HepG2 (cell line): ENCODE measurements at regions of chr3 and their contacts with region 1.

Region 1: DNA sequence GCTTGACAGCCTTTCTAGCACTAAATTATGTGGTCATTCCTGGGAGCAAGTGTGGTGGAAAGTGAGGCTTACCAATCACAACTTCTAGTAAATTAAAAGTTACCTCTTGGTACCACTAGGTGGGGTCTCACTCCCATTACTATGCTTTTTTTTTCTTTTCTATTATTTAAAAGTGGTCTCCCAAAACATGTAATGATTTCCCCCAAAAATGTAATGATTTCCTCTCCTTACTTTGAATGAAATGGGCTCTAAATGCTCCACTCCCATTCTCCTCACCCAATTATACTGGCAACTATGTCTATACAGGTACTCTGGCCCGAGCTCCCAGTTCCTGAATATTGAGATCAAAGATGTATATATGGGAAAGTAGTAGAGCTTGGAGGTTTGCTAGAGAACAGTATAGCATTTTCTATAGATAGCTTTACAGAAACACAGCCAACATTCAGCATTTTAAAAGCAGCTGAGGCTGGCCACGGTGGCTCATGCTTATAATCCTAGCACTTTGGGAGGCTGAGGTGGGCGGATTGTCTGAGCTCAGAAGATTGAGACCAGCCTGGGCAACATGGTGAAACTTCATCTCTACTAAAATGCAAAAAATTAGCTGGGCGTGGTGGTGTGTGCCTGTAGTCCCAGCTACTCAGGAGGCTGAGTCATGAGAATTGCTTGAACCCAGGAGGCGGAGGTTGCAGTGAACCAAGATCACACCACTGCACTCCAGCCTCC is 70.9 kb downstream of the DCUN1D1 start:
- DNase-seq: no peak
- ATAC-seq: peak; percentile 57; the same call in 2 of the 3 replicates
- H3K4me3 ChIP-seq: no peak overlapping the region
- H3K27ac ChIP-seq: no peak overlapping the region
- H3K4me1 ChIP-seq: no peaks in the 10 kb centered on the region
- H3K27me3 ChIP-seq: no peaks in the 10 kb centered on the region
- CTCF ChIP-seq: peak; percentile 49
- EP300 ChIP-seq: no peak
- POLR2A ChIP-seq: no peak
- RAD21 ChIP-seq: no peak

Region 2: DNA sequence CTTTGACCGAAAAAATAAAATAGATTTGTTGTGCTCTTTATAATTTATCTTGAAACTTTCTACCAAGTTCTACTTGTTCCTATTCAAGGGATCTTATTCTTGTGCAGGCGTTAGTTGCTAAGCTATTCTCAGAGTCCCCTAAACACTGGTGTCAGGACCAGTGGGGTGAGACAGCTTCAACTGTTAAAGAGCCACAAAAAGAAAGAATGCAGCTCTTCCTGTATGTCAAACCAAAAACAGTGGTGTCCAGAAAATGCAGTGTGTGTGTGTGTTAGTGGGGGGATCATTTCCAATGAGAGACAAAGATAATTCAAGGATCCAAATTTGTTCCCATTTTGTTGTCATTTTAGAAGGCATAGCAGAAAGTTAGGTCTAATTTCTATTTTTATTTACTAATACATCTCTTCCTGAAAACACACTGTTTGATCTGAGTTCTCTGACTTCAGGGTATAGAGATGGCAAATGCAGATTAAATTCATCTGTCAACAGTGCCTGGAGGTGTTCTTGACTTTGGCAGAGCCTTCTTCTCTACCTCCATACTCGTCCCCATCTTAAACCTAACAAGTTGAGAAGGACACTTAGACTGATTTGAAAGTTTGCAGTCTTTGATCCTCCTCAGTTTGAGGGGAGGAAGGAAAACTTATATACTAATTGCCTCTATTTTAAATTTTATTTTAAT is 889.7 kb before region 1 on chr3:
- CTCF ChIA-PET with region 1: no interaction called
- POLR2A ChIA-PET with region 1: no interaction called
- in situ Hi-C with region 1: no loop called
- intact Hi-C with region 1: loop called (anchors 5 kb)
- DNase-seq: no peak
- ATAC-seq: no peak
- H3K4me3 ChIP-seq: no peak overlapping the region
- H3K27ac ChIP-seq: no peak overlapping the region
- H3K4me1 ChIP-seq: no peaks in the 10 kb centered on the region
- H3K27me3 ChIP-seq: no peaks in the 10 kb centered on the region; a peak in 1 of 5 replicates
- CTCF ChIP-seq: no peak
- EP300 ChIP-seq: no peak
- POLR2A ChIP-seq: no peak
- RAD21 ChIP-seq: no peak

Region 3: GRCh38 chr3:182692021-182692420 is 217.5 kb before region 1 on chr3:
- CTCF ChIA-PET with region 1: no interaction called
- POLR2A ChIA-PET with region 1: no interaction called
- in situ Hi-C with region 1: no loop called
- intact Hi-C with region 1: no loop called
- DNase-seq: no peak
- ATAC-seq: no peak
- H3K4me3 ChIP-seq: no peak overlapping the region
- H3K27ac ChIP-seq: no peak overlapping the region
- H3K4me1 ChIP-seq: no peaks in the 10 kb centered on the region
- H3K27me3 ChIP-seq: 0 out of 5 replicates have a peak, but pooled peaks cover 0 to 2% of the 10 kb centered on the region in 2 experiments
- CTCF ChIP-seq: no peak
- EP300 ChIP-seq: no peak
- POLR2A ChIP-seq: no peak
- RAD21 ChIP-seq: no peak

Region 4: GRCh38 chr3:182861348-182861747 is 48.1 kb before region 1 on chr3:
- CTCF ChIA-PET with region 1: no interaction called
- POLR2A ChIA-PET with region 1: no interaction called
- in situ Hi-C with region 1: no loop called
- intact Hi-C with region 1: no loop called
- DNase-seq: no peak
- ATAC-seq: no peak
- H3K4me3 ChIP-seq: no peak overlapping the region
- H3K27ac ChIP-seq: no peak overlapping the region
- H3K4me1 ChIP-seq: no peaks in the 10 kb centered on the region
- H3K27me3 ChIP-seq: no peaks in the 10 kb centered on the region
- CTCF ChIP-seq: no peak
- EP300 ChIP-seq: no peak
- POLR2A ChIP-seq: no peak
- RAD21 ChIP-seq: no peak

Region 5: GRCh38 chr3:182925330-182925943 is 16.0 kb after region 1 on chr3:
- CTCF ChIA-PET with region 1: no interaction called
- POLR2A ChIA-PET with region 1: no interaction called
- in situ Hi-C with region 1: no loop called
- intact Hi-C with region 1: no loop called
- DNase-seq: no peak
- ATAC-seq: no peak
- H3K4me3 ChIP-seq: no peak overlapping the region
- H3K27ac ChIP-seq: no peak overlapping the region
- H3K4me1 ChIP-seq: no peaks in the 10 kb centered on the region
- H3K27me3 ChIP-seq: no peaks in the 10 kb centered on the region
- CTCF ChIP-seq: no peak
- EP300 ChIP-seq: no peak
- POLR2A ChIP-seq: no peak
- RAD21 ChIP-seq: no peak